GM12878 (cell line): ENCODE measurements at regions of chr16 and their contacts with region 1.

Region 1: GRCh38 chr16:20826039-20826566 is 19.8 kb downstream of the REXO5 start:
- DNase-seq: no peak
- ATAC-seq: no peak
- H3K4me3 ChIP-seq: no peak overlapping the region
- H3K27ac ChIP-seq: no peak overlapping the region
- H3K4me1 ChIP-seq: peaks cover 8% of the 10 kb centered on the region
- H3K27me3 ChIP-seq: no peaks in the 10 kb centered on the region
- CTCF ChIP-seq: no peak
- EP300 ChIP-seq: no peak
- POLR2A ChIP-seq: no peak
- RAD21 ChIP-seq: no peak

Region 2: GRCh38 chr16:20814784-20815183 is 11.3 kb before region 1 on chr16:
- CTCF ChIA-PET with region 1: no interaction called
- POLR2A ChIA-PET with region 1: interaction called, 11 read pairs
- RAD21 ChIA-PET with region 1: no interaction called
- SMC1A ChIA-PET with region 1: interaction called, 8 read pairs
- in situ Hi-C with region 1: no loop called
- intact Hi-C with region 1: no loop called
- DNase-seq: no peak
- ATAC-seq: peak; percentile 87
- H3K4me3 ChIP-seq: no peak overlapping the region
- H3K27ac ChIP-seq: no peak overlapping the region
- H3K4me1 ChIP-seq: no peaks in the 10 kb centered on the region
- H3K27me3 ChIP-seq: no peaks in the 10 kb centered on the region
- CTCF ChIP-seq: no peak
- EP300 ChIP-seq: no peak
- POLR2A ChIP-seq: no peak
- RAD21 ChIP-seq: no peak